ENCODE measurements at regions of chr2 and their contacts with region 1.

Region 1: DNA sequence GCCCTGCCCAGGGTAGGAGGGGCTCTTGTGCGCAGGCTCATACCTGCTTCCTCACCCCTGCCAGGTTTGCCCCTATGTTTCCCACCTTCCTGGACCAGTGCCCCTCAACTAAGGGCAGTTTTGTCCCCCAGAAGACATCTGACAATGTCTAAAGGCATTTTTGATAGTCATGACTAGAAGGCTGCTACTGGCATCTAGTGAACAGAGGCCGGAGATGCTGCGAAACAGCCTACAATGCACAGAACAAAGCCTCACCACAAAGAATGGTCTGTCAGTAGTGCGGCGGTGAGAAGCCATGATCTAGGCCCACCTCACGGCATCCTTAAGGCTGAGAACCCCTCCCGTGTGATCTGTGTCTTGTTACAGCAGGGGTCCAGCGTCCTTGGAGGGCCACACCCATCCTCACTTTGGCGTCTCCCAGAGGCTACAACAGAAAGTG is 96.0 kb downstream of the TMEM17 start:
- DNase-seq: no peak
- ATAC-seq: no peak
- H3K4me3 ChIP-seq: no peak overlapping the region
- H3K27ac ChIP-seq: no peak overlapping the region
- H3K4me1 ChIP-seq: peaks cover 2% of the 10 kb centered on the region; the same call in 1 of the 2 replicates
- H3K27me3 ChIP-seq: peaks cover 6% of the 10 kb centered on the region
- CTCF ChIP-seq: no peak
- POLR2A ChIP-seq: no peak
- RAD21 ChIP-seq: no peak; the same call in 1 of the 2 replicates

Region 2: GRCh38 chr2:61910603-61911002 is 499.4 kb before region 1 on chr2:
- CTCF ChIA-PET with region 1: no interaction called
- POLR2A ChIA-PET with region 1: no interaction called
- dilution Hi-C with region 1: no loop called
- in situ Hi-C with region 1: loop called (anchors 5 kb)
- intact Hi-C with region 1: no loop called
- DNase-seq: no peak
- ATAC-seq: no peak
- H3K4me3 ChIP-seq: no peak overlapping the region
- H3K27ac ChIP-seq: no peak overlapping the region
- H3K4me1 ChIP-seq: no peaks in the 10 kb centered on the region
- H3K27me3 ChIP-seq: no peaks in the 10 kb centered on the region
- CTCF ChIP-seq: 0 out of 2 replicates have a peak, but pooled peaks have one; percentile 25
- POLR2A ChIP-seq: no peak
- RAD21 ChIP-seq: 0 out of 2 replicates have a peak, but pooled peaks have one; percentile 5

Region 3: DNA sequence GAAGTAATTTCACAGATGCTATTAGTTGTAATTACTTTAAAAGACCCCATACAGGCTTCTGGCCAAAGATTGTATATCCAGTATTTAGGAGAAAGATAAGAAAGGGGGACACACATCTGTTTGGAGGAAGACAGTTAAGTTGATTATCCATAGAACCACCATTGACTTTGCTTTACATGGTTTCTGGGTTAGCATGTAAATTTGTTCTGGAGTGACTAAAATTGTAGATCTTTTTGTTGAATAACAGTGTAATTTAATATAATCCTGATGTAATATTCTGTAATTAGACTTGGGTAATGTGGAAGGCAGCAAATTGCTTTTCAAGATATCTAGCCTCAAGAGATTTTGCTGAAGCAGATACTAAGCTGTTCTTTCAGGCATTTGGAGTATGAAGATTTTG is 487.3 kb before region 1 on chr2:
- CTCF ChIA-PET with region 1: no interaction called
- POLR2A ChIA-PET with region 1: no interaction called
- dilution Hi-C with region 1: no loop called
- in situ Hi-C with region 1: loop called (anchors 5 kb)
- intact Hi-C with region 1: loop called (anchors 1 kb)
- DNase-seq: no peak
- ATAC-seq: no peak
- H3K4me3 ChIP-seq: no peak overlapping the region
- H3K27ac ChIP-seq: no peak overlapping the region
- H3K4me1 ChIP-seq: no peaks in the 10 kb centered on the region
- H3K27me3 ChIP-seq: no peaks in the 10 kb centered on the region
- CTCF ChIP-seq: no peak
- POLR2A ChIP-seq: no peak
- RAD21 ChIP-seq: no peak

Region 4: GRCh38 chr2:61993444-61994024 is 416.5 kb before region 1 on chr2:
- CTCF ChIA-PET with region 1: interaction called, 3 read pairs
- POLR2A ChIA-PET with region 1: no interaction called
- dilution Hi-C with region 1: no loop called
- in situ Hi-C with region 1: no loop called
- intact Hi-C with region 1: loop called (anchors 1 kb)
- DNase-seq: peak; percentile 62
- ATAC-seq: peak; percentile 81
- H3K4me3 ChIP-seq: no peak overlapping the region
- H3K27ac ChIP-seq: no peak overlapping the region
- H3K4me1 ChIP-seq: no peaks in the 10 kb centered on the region
- H3K27me3 ChIP-seq: no peaks in the 10 kb centered on the region
- CTCF ChIP-seq: peak; percentile 77
- POLR2A ChIP-seq: no peak
- RAD21 ChIP-seq: peak; percentile 80

Region 5: GRCh38 chr2:62000538-62000937 is 409.5 kb before region 1 on chr2:
- CTCF ChIA-PET with region 1: no interaction called
- POLR2A ChIA-PET with region 1: no interaction called
- dilution Hi-C with region 1: no loop called
- in situ Hi-C with region 1: loop called (anchors 5 kb)
- intact Hi-C with region 1: no loop called
- DNase-seq: no peak
- ATAC-seq: no peak
- H3K4me3 ChIP-seq: no peak overlapping the region
- H3K27ac ChIP-seq: no peak overlapping the region
- H3K4me1 ChIP-seq: no peaks in the 10 kb centered on the region
- H3K27me3 ChIP-seq: no peaks in the 10 kb centered on the region
- CTCF ChIP-seq: no peak
- POLR2A ChIP-seq: no peak
- RAD21 ChIP-seq: no peak

Region 6: DNA sequence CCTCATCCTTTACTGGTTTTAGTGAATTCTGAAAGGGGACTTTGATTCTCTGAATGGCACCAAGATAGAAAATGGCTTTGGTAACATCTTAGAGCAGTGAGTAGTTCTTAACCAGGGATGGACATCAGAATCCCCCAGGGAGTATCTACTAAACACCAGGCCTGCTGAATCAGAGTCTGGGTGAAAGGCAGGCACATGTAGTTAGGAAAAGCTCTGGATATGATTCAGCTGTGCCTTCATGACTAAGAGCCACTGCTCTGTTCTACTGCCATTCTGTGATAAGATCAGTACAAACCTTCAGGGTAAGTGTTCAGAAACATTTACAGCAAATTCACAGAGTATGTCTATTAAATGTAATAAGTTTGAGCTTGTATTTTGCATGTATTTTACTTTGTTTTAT is 260.3 kb before region 1 on chr2:
- CTCF ChIA-PET with region 1: no interaction called
- POLR2A ChIA-PET with region 1: no interaction called
- dilution Hi-C with region 1: no loop called
- in situ Hi-C with region 1: no loop called
- intact Hi-C with region 1: loop called (anchors 2 kb)
- DNase-seq: peak; percentile 96
- ATAC-seq: peak; percentile 98
- H3K4me3 ChIP-seq: no peak overlapping the region
- H3K27ac ChIP-seq: no peak overlapping the region
- H3K4me1 ChIP-seq: no peaks in the 10 kb centered on the region
- H3K27me3 ChIP-seq: no peaks in the 10 kb centered on the region
- CTCF ChIP-seq: no peak
- POLR2A ChIP-seq: no peak
- RAD21 ChIP-seq: no peak

Region 7: DNA sequence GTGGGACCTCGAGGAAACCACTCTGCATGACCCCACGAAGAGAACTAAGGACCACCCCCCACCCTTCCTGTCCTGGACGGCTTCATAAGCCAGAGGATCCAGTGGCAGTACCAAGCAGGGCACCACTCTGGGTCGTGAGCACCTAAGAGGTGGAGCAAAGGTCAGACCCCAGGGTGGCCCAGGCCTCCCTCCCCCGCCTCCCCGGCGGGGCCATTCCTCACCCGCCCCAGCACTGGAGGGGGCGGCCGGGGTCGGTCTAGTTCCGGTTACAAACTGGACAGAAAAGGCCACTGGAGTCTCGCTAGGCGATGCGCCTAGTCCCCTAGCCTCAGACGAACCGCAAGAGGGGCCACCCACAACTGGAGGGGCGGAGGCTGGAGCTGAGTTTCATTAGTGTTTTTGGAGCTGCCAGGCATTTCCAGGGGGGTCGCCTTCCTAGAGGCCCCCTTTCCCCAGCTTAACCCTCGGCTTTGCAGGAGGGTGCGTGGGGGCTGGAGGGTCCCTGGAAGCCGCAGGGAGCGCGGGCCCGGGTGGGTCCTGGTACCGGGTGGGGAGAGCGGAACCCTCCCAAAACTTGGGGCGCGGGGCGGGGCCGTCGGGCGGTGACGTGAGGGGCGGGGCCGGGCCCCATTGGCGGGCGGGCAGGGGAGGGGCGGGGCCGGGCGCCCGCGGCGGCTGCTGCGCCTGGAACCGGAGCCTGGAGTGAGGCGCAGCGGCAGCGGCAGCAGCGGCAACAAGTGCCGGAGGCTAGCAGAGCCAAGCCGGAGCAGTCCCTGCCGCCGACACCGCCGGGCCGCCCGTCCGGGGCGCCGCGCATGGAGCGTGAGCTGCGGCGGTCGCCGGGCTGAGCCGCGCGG is 214.4 kb before region 1 on chr2 and contains the start of gene B3GNT2:
- CTCF ChIA-PET with region 1: no interaction called
- POLR2A ChIA-PET with region 1: no interaction called
- dilution Hi-C with region 1: no loop called
- in situ Hi-C with region 1: no loop called
- intact Hi-C with region 1: loop called (anchors 1 kb)
- DNase-seq: peak; percentile 57
- ATAC-seq: peak; percentile 93
- H3K4me3 ChIP-seq: peak within 1 kb of the TSS; percentile 91
- H3K27ac ChIP-seq: peak within 1 kb of the TSS; percentile 90
- H3K4me1 ChIP-seq: no peaks in the 10 kb centered on the region
- H3K27me3 ChIP-seq: no peaks in the 10 kb centered on the region; the same call in 1 of the 2 replicates
- CTCF ChIP-seq: no peak
- POLR2A ChIP-seq: peak; percentile 59
- RAD21 ChIP-seq: no peak
- total RNA-seq, gene B3GNT2: 11.1 and 12.2 TPM in 2 replicates

Region 8: GRCh38 chr2:62227386-62228075 is 182.5 kb before region 1 on chr2:
- CTCF ChIA-PET with region 1: no interaction called
- POLR2A ChIA-PET with region 1: no interaction called
- dilution Hi-C with region 1: no loop called
- in situ Hi-C with region 1: no loop called
- intact Hi-C with region 1: no loop called
- DNase-seq: peak; percentile 6
- ATAC-seq: no peak
- H3K4me3 ChIP-seq: no peak overlapping the region
- H3K27ac ChIP-seq: no peak overlapping the region
- H3K4me1 ChIP-seq: peaks cover 3% of the 10 kb centered on the region; the same call in 1 of the 2 replicates
- H3K27me3 ChIP-seq: no peaks in the 10 kb centered on the region
- CTCF ChIP-seq: no peak
- POLR2A ChIP-seq: no peak
- RAD21 ChIP-seq: no peak